MCF 10A (cell line): ENCODE measurements at regions of chr19 and their contacts with region 1.

Region 1: DNA sequence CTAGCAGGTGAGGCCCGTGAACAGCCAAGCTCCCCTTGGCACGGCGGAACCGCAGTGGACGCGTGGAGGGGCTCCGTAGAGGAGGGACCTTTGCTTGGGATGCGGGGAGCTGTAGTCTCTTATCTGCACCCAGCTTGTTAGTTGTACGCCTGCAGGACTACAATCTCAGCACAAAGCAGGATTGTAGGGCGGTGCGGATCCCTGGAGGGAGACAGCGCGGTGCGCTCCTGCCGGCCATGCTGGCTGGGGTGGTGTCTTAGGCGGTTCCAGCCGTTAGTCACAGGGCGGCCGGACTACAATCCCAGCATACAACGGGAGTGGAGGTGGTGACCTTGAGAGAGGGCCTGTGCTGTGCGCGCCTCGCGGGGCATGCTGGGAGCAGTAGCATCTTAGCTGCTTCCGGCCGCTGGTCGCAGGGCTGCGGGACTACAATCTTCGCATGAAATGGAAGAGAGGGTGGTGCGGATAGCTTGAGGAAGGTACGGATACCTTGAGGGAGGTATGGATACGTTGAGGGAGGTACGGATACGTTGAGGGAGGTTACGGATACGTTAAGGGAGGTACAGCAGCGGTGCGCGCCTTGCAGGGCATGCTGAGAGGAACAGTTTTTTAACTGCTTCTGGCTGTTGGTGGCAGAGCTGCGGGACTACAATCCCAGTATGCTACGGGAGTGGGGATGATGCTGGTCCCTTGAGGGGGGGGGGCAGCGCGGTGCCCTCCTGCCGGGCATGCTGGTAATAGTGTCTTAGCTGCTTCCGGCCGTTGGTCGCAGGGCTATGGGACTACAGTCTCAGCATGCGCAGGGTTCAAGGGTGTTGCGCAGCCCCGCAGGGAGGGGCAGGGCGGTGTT is 1419.1 kb downstream of the UQCRFS1 start:
- DNase-seq: peak; percentile 96
- H3K4me3 Mint-ChIP-seq: peak overlapping the region; percentile 89
- H3K27ac Mint-ChIP-seq: peak overlapping the region; percentile 91
- H3K4me1 Mint-ChIP-seq: peaks cover 10% of the 10 kb centered on the region
- H3K27me3 Mint-ChIP-seq: no peaks in the 10 kb centered on the region
- CTCF ChIP-seq: no peak

Region 2: DNA sequence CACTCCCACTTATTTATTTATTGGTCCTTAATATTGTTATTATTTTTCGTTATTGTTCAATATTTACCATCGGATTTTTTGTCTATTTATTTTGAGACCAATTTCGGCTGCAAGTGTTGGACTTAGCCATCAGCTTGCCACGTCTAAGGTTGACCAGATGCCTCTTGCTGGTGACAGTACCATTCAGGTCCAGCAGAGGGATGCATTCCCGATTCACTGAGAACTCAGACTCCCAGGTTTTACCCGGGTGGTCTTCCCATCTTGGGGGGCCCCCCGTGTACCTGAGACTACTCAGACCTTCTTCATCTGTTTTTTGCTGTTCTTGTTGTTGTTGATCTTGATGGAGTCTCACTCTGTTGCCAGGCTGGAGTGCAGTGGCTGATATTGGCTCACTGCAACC is 16.1 kb before region 1 on chr19:
- CTCF ChIA-PET with region 1: interaction called, 5 read pairs
- POLR2A ChIA-PET with region 1: interaction called, 26 read pairs
- intact Hi-C with region 1: no loop called
- DNase-seq: no peak
- H3K4me3 Mint-ChIP-seq: no peak overlapping the region
- H3K27ac Mint-ChIP-seq: no peak overlapping the region
- H3K4me1 Mint-ChIP-seq: peaks cover 11% of the 10 kb centered on the region
- H3K27me3 Mint-ChIP-seq: no peaks in the 10 kb centered on the region
- CTCF ChIP-seq: no peak

Region 3: GRCh38 chr19:27822336-27822735 is 28.5 kb after region 1 on chr19:
- CTCF ChIA-PET with region 1: no interaction called
- POLR2A ChIA-PET with region 1: interaction called, 10 read pairs
- intact Hi-C with region 1: no loop called
- DNase-seq: no peak
- H3K4me3 Mint-ChIP-seq: no peak overlapping the region
- H3K27ac Mint-ChIP-seq: no peak overlapping the region
- H3K4me1 Mint-ChIP-seq: no peaks in the 10 kb centered on the region
- H3K27me3 Mint-ChIP-seq: no peaks in the 10 kb centered on the region
- CTCF ChIP-seq: no peak

Region 4: DNA sequence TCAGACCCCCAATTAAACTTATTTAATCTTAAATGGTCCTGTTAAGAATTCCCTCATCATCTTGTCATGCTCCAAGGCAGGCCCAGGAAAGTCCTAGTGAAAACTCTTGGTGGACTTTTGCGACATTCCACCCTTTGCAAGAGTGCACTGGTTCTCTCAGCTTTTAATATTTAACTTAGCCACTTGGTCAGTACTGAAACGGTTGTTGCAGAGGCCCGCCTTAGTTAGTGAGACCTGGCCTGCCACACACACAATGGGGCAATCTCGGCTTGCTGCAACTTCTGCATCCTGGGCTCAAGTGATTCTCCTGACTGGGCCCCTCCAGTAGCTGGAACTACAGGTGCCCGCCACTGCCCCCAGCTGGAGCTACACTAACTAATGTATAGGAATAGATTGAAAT is 53.1 kb after region 1 on chr19:
- CTCF ChIA-PET with region 1: no interaction called
- POLR2A ChIA-PET with region 1: no interaction called
- intact Hi-C with region 1: no loop called
- DNase-seq: no peak
- H3K4me3 Mint-ChIP-seq: no peak overlapping the region
- H3K27ac Mint-ChIP-seq: no peak overlapping the region
- H3K4me1 Mint-ChIP-seq: no peaks in the 10 kb centered on the region
- H3K27me3 Mint-ChIP-seq: no peaks in the 10 kb centered on the region
- CTCF ChIP-seq: no peak

Region 5: GRCh38 chr19:27858981-27859581 is 65.2 kb after region 1 on chr19:
- CTCF ChIA-PET with region 1: no interaction called
- POLR2A ChIA-PET with region 1: no interaction called
- intact Hi-C with region 1: no loop called
- DNase-seq: no peak
- H3K4me3 Mint-ChIP-seq: no peak overlapping the region
- H3K27ac Mint-ChIP-seq: no peak overlapping the region
- H3K4me1 Mint-ChIP-seq: no peaks in the 10 kb centered on the region
- H3K27me3 Mint-ChIP-seq: no peaks in the 10 kb centered on the region
- CTCF ChIP-seq: no peak